Cardiac septum (tissue), 1 donor: ENCODE measurements at regions of chr3 and their contacts with region 1.

Region 1: GRCh38 chr3:37526511-37526910 is 335.2 kb upstream of the CTDSPL start:
- DNase-seq: peak; percentile 91

Region 2: GRCh38 chr3:37504583-37505357 is 21.7 kb before region 1 on chr3:
- intact Hi-C with region 1: loop called (anchors 1 kb)
- DNase-seq: no peak

Region 3: GRCh38 chr3:37543666-37544065 is 17.2 kb after region 1 on chr3:
- intact Hi-C with region 1: loop called (anchors 2 kb)
- DNase-seq: no peak

Region 4: DNA sequence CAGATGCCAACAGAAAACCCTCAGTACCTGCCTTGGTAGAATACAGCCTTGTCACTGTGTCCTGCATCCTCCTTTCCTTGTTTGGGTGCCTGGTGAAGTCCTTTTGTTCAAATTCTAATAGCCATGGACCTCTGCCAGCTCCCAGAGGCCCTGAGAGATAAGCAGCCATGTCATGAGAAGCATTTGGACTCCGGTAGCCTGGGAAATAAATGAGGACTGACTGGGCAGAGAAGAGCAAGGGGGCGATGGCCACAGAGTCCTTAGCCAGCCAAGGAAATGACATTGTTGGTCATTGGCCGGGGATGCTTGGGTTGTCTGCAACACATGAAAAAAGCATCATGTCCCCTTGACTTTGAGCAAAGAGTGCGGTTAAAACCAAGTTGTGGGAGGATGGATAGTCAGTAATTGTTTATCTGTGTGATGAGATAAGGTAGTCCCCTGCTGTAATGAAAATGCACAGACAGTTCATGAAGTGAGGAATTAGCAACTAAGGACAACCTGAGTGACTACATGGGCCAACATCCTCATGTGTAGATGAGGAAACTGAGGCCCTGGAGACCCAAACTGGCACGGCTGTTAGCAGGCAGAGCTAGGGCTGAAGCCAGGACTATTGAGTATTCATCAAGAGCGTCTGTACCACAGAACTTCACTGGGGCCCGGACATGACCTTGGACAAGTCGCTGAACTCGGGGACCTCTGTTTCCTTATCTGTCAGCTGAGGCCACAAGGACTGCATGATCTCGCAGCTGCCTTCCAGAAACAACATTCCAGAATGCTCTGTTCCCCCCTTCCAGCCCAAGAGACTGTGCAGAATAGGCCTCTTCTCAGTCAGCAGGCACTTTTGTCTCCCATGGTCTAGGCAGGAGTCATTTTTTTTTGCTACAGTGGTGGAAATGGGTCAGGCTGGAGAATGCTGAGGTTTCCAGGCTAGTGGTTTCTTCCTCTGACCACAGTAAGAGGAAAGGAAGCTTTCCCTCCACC is 244.7 kb after region 1 on chr3:
- intact Hi-C with region 1: loop called (anchors 5 kb)
- DNase-seq: peak; percentile 82